HepG2 (cell line): ENCODE measurements at regions of chr11 and their contacts with region 1.

Region 1: GRCh38 chr11:85664615-85665481 is at the start of gene CREBZF:
- DNase-seq: peak; percentile 85
- ATAC-seq: peak; percentile 94
- H3K4me3 ChIP-seq: peak within 1 kb of the TSS; percentile 72 to 95 (median 86)
- H3K27ac ChIP-seq: peak within 1 kb of the TSS; percentile 98
- H3K4me1 ChIP-seq: peaks cover 40% of the 10 kb centered on the region
- H3K27me3 ChIP-seq: no peaks in the 10 kb centered on the region; a peak in 1 of 5 replicates
- CTCF ChIP-seq: peak; percentile 33; the same call in 1 of the 2 replicates
- EP300 ChIP-seq: no peak
- POLR2A ChIP-seq: peak; percentile 95 to 96
- RAD21 ChIP-seq: no peak; the same call in 1 of the 2 replicates
- total RNA-seq, gene CREBZF: 17.2 and 43.1 TPM in 2 replicates

Region 2: GRCh38 chr11:85647604-85648299 is 17.1 kb before region 1 on chr11 and contains the start of gene TMEM126A:
- CTCF ChIA-PET with region 1: no interaction called
- POLR2A ChIA-PET with region 1: interaction called, 112 read pairs
- in situ Hi-C with region 1: no loop called
- intact Hi-C with region 1: loop called (anchors 2 kb)
- DNase-seq: peak; percentile 86
- ATAC-seq: peak; percentile 97
- H3K4me3 ChIP-seq: peak within 1 kb of the TSS; percentile 81 to 83 (median 82)
- H3K27ac ChIP-seq: peak within 1 kb of the TSS; percentile 77
- H3K4me1 ChIP-seq: peaks cover 18% of the 10 kb centered on the region
- H3K27me3 ChIP-seq: no peaks in the 10 kb centered on the region; a peak in 1 of 5 replicates
- CTCF ChIP-seq: no peak; the same call in 1 of the 2 replicates
- EP300 ChIP-seq: peak in 1 of 2 experiments; percentile 7; a peak in 1 of 4 replicates
- POLR2A ChIP-seq: peak; percentile 90
- RAD21 ChIP-seq: no peak
- total RNA-seq, gene TMEM126A: 66.9 and 68.7 TPM in 2 replicates

Region 3: DNA sequence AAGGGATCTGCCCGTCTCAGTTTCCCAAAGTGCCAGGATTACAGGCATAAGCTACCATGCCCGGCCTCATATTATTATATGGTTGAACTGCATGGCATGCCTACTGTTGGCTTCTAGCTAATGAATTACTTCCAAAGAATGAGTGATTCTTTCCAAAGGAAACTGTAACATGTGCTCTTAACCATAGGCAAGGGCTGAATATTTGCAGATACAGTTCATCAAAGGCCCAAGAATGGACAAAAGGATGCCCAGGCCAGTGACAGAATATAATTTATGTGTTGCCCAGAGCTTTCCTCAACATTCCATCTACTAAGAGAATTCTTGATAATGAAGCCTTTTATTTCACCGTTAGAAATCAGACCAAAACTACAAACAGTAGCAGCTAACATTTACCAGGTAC is 48.1 kb after region 1 on chr11:
- CTCF ChIA-PET with region 1: no interaction called
- POLR2A ChIA-PET with region 1: no interaction called
- in situ Hi-C with region 1: no loop called
- intact Hi-C with region 1: loop called (anchors 1 kb)
- DNase-seq: no peak
- ATAC-seq: no peak
- H3K4me3 ChIP-seq: no peak overlapping the region
- H3K27ac ChIP-seq: no peak overlapping the region
- H3K4me1 ChIP-seq: no peaks in the 10 kb centered on the region
- H3K27me3 ChIP-seq: no peaks in the 10 kb centered on the region
- CTCF ChIP-seq: no peak
- EP300 ChIP-seq: no peak
- POLR2A ChIP-seq: no peak
- RAD21 ChIP-seq: no peak